ENCODE measurements at regions of chr10 and their contacts with region 1.

Region 1: GRCh38 chr10:70348228-70348850 is 34.1 kb downstream of the LRRC20 start:
- DNase-seq: peak in 1 of 2 donors; percentile 50
- ATAC-seq: peak; percentile 43 to 56
- H3K4me3 ChIP-seq: no peak overlapping the region
- H3K27ac ChIP-seq: peak overlapping the region; percentile 4 to 86 (median 55)
- H3K4me1 ChIP-seq: peaks cover 22 to 48% of the 10 kb centered on the region in 2 donors
- H3K27me3 ChIP-seq: no peaks in the 10 kb centered on the region
- CTCF ChIP-seq: peak; percentile 41 to 73 (median 54)
- POLR2A ChIP-seq: no peak

Region 2: GRCh38 chr10:70221030-70221429 is 127.3 kb before region 1 on chr10:
- in situ Hi-C with region 1: no loop called
- intact Hi-C with region 1: loop called (anchors 1 kb)
- DNase-seq: no peak
- ATAC-seq: no peak
- H3K4me3 ChIP-seq: peak overlapping the region in 2 of 4 donors; percentile 8 to 26
- H3K27ac ChIP-seq: peak overlapping the region; percentile 20 to 64 (median 57)
- H3K4me1 ChIP-seq: peaks cover 0 to 9% of the 10 kb centered on the region in 2 donors
- H3K27me3 ChIP-seq: no peaks in the 10 kb centered on the region
- CTCF ChIP-seq: no peak
- POLR2A ChIP-seq: no peak

Region 3: GRCh38 chr10:70233109-70233938 is 115.0 kb before region 1 on chr10 and contains the start of gene PPA1:
- in situ Hi-C with region 1: no loop called
- intact Hi-C with region 1: loop called (anchors 1 kb)
- DNase-seq: peak; percentile 97 to 98
- ATAC-seq: peak; percentile 88 to 90
- H3K4me3 ChIP-seq: peak within 1 kb of the TSS; percentile 66 to 92 (median 86)
- H3K27ac ChIP-seq: peak within 1 kb of the TSS; percentile 83 to 92 (median 90)
- H3K4me1 ChIP-seq: peaks cover 12 to 16% of the 10 kb centered on the region in 2 donors
- H3K27me3 ChIP-seq: no peaks in the 10 kb centered on the region
- CTCF ChIP-seq: peak in 3 of 5 experiments; percentile 12 to 46 (median 43)
- POLR2A ChIP-seq: peak; percentile 85 to 93
- total RNA-seq, gene PPA1: 73.9 to 146 (median 95.3) TPM

Region 4: GRCh38 chr10:70296406-70296899 is 51.9 kb before region 1 on chr10:
- in situ Hi-C with region 1: no loop called
- intact Hi-C with region 1: loop called (anchors 1 kb)
- DNase-seq: peak; percentile 81 to 89
- ATAC-seq: peak; percentile 97 to 99
- H3K4me3 ChIP-seq: no peak overlapping the region
- H3K27ac ChIP-seq: peak overlapping the region; percentile 69 to 85 (median 80)
- H3K4me1 ChIP-seq: peaks cover 7 to 15% of the 10 kb centered on the region in 2 donors
- H3K27me3 ChIP-seq: no peaks in the 10 kb centered on the region
- CTCF ChIP-seq: no peak
- POLR2A ChIP-seq: peak in 1 of 2 donors; percentile 9

Region 5: DNA sequence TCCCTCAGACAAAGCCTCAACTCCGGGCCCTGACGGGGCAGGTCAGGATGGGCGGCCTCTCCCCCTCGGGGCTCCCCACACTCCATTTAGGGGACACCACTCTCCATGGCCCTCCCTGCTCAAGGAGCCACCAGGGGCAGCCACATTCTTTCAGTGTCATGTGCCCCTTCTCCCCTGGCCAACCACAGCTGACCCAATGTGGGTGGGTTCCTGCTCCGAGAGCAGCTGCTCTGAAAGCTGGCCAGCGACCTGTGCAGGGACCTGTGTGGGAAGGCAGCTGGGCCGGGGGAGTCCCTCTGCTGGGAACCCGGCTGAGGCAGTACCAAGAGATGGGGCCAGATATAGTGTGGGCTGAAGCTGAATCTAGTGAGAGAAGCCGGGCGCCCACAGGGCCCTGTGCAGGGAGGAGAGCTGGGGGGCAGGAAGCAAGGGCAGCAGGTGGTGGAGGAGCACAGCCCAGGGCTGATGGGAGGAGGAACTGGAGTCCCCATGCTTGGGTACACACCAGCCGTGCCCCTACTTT is 23.9 kb before region 1 on chr10:
- in situ Hi-C with region 1: no loop called
- intact Hi-C with region 1: loop called (anchors 1 kb)
- DNase-seq: peak in 1 of 2 donors; percentile 57
- ATAC-seq: peak; percentile 25 to 41
- H3K4me3 ChIP-seq: no peak overlapping the region
- H3K27ac ChIP-seq: peak overlapping the region; percentile 68 to 79 (median 75)
- H3K4me1 ChIP-seq: peaks cover 27 to 55% of the 10 kb centered on the region in 2 donors
- H3K27me3 ChIP-seq: no peaks in the 10 kb centered on the region
- CTCF ChIP-seq: no peak
- POLR2A ChIP-seq: peak in 1 of 2 donors; percentile 11

Region 6: DNA sequence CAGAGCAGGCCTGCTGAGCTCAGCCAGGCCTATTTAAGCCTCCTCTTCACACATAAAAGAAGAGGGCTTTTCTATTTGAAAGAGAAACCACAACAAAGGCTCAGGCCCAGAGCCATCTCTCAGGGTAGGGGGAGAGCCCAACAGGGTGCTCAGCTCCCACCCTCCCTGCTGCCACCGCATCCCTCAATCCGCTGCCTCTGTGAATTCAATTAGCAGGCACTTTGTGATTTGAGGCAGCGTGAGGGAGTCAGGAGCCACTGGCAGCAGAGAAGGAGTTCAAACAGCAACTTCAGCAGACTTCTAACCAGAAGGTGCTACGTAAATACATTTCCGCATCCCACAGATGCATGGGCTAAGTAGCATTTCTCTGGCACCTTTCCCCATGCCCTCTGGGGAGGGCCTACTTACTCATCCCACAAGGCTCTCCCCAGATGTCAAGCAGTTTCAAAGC is 11.1 kb before region 1 on chr10:
- in situ Hi-C with region 1: no loop called
- intact Hi-C with region 1: no loop called
- DNase-seq: no peak
- ATAC-seq: no peak
- H3K4me3 ChIP-seq: no peak overlapping the region
- H3K27ac ChIP-seq: peak overlapping the region in 1 of 4 donors; percentile 21
- H3K4me1 ChIP-seq: peaks cover 57 to 59% of the 10 kb centered on the region in 2 donors
- H3K27me3 ChIP-seq: no peaks in the 10 kb centered on the region
- CTCF ChIP-seq: no peak
- POLR2A ChIP-seq: no peak